Endothelial cell of umbilical vein (primary cell): ENCODE measurements at regions of chr21 and their contacts with region 1.

Region 1: DNA sequence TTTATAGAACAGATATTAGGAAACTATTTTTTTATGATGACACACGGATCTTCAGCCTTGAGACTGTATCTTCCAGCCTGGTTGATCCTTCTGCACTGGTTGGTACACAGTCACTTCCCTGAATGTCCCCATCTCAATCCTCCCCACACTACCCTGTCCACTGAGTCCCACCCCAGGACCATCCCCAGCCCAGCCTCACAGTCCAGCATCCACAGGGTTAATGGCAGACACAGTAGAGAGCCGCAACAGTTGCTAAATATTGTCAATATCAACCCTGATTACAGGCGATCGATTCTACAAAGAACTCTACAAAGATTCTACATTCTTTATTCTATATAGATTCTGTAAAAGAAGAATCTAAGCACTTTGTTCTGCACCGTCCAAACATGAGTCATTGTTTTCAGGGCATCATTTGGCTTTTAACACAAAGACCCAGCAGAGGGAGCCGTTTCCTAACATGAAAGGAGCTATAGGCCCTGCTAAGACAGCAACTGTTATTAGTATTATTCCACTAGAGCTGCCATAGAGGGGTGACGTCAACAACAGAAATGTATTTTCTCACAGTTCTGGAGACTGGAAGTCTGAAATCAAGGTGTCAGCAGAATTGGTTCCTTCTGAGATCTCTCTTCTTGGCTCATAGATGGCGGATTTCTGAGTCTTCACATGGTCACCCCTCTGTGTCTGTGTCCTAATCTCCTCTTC is 30.1 kb upstream of the IFNAR2 start:
- DNase-seq: peak; percentile 95
- H3K4me3 ChIP-seq: no peak overlapping the region
- H3K27ac ChIP-seq: no peak overlapping the region
- H3K4me1 ChIP-seq: no peaks in the 10 kb centered on the region
- H3K27me3 ChIP-seq: no peaks in the 10 kb centered on the region
- CTCF ChIP-seq: peak; percentile 66
- POLR2A ChIP-seq: no peak

Region 2: GRCh38 chr21:32712043-32712442 is 487.6 kb before region 1 on chr21:
- CTCF ChIA-PET with region 1: no interaction called
- POLR2A ChIA-PET with region 1: no interaction called
- dilution Hi-C with region 1: no loop called
- intact Hi-C with region 1: no loop called
- DNase-seq: no peak
- H3K4me3 ChIP-seq: no peak overlapping the region
- H3K27ac ChIP-seq: no peak overlapping the region
- H3K4me1 ChIP-seq: peaks cover 31% of the 10 kb centered on the region
- H3K27me3 ChIP-seq: no peaks in the 10 kb centered on the region
- CTCF ChIP-seq: no peak
- POLR2A ChIP-seq: no peak

Region 3: DNA sequence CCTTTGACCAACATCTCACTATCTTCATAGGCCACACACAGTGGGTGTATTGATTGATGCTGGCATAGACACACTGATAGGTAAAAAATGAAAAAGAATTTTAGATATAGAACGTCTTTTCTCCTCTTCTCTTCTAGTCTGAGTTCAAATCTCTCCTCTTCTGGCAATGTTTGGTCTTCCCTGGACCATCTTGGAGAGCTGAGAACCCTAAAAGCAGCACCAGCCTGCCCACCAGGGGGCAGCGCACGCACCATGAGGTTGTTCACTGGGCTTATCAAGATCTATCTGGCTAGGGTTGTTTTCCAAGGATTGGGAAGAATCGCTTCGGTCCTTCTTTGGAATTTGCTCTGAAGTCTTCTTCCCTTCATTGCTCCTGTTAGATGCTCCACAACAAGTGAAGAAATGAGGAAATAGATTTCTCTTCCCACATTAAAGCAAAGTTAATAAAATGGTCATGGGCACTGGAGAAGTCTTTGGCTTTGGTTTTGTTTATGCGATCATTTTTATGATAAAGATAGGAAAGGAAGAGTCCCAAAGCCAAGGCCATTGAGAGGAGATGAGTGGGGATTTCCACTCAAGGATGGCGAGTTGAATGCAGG is 277.9 kb before region 1 on chr21:
- CTCF ChIA-PET with region 1: interaction called, 36 read pairs
- POLR2A ChIA-PET with region 1: no interaction called
- dilution Hi-C with region 1: no loop called
- intact Hi-C with region 1: loop called (anchors 1 kb)
- DNase-seq: peak; percentile 6
- H3K4me3 ChIP-seq: no peak overlapping the region
- H3K27ac ChIP-seq: no peak overlapping the region
- H3K4me1 ChIP-seq: no peaks in the 10 kb centered on the region
- H3K27me3 ChIP-seq: peaks cover 4 to 7% of the 10 kb centered on the region in 2 experiments
- CTCF ChIP-seq: peak; percentile 61 to 65
- POLR2A ChIP-seq: no peak

Region 4: DNA sequence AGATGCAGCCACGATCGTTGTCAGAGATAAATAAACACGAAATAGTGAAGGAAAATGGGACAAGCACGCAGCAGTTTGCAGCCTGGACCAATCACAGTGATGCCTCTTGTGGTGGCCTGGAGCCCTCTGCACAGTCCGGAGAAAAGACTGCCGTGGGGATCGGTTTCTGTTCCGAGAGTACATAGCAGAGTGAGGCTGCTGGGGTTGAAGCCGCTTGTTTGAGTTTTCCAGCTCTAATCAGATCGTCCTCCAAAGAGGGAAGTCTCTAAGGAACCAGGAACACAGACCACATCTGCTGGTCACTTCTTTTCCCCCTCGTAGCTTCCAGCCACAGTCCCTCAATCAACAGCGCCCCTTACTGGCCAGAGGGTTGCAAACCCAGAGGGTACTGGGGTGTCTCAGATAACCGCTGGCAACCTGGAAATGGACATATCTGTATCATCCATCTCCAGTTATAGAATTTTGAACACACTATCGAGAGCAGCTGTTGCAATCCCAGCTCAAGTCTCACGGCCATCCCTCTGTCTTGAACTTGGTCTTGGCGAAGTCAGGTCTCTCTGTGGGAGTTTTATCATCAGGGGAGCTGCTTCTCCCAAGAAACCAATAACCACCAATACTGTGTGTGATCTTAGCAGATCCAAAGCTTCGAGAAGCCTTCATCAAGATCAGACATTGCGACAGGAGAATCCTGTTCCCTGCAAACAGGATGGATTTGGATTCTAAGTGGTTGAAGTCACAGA is 72.3 kb before region 1 on chr21:
- CTCF ChIA-PET with region 1: interaction called, 20 read pairs
- POLR2A ChIA-PET with region 1: no interaction called
- dilution Hi-C with region 1: no loop called
- intact Hi-C with region 1: loop called (anchors 2 kb)
- DNase-seq: peak; percentile 70
- H3K4me3 ChIP-seq: no peak overlapping the region
- H3K27ac ChIP-seq: no peak overlapping the region
- H3K4me1 ChIP-seq: no peaks in the 10 kb centered on the region
- H3K27me3 ChIP-seq: peaks cover 10 to 18% of the 10 kb centered on the region in 2 experiments
- CTCF ChIP-seq: peak; percentile 88
- POLR2A ChIP-seq: no peak

Region 5: GRCh38 chr21:33229784-33230544 is 30.3 kb after region 1 on chr21 and contains the start of gene IFNAR2:
- CTCF ChIA-PET with region 1: interaction called, 11 read pairs
- POLR2A ChIA-PET with region 1: no interaction called
- dilution Hi-C with region 1: no loop called
- intact Hi-C with region 1: no loop called
- DNase-seq: peak; percentile 62
- H3K4me3 ChIP-seq: peak within 1 kb of the TSS; percentile 90 to 98 (median 96)
- H3K27ac ChIP-seq: peak within 1 kb of the TSS; percentile 88
- H3K4me1 ChIP-seq: peaks cover 40% of the 10 kb centered on the region
- H3K27me3 ChIP-seq: peaks cover 6 to 10% of the 10 kb centered on the region in 2 experiments
- CTCF ChIP-seq: no peak
- POLR2A ChIP-seq: peak; percentile 15
- total RNA-seq, gene IFNAR2: 37.0 and 42.1 TPM in 2 replicates

Region 6: DNA sequence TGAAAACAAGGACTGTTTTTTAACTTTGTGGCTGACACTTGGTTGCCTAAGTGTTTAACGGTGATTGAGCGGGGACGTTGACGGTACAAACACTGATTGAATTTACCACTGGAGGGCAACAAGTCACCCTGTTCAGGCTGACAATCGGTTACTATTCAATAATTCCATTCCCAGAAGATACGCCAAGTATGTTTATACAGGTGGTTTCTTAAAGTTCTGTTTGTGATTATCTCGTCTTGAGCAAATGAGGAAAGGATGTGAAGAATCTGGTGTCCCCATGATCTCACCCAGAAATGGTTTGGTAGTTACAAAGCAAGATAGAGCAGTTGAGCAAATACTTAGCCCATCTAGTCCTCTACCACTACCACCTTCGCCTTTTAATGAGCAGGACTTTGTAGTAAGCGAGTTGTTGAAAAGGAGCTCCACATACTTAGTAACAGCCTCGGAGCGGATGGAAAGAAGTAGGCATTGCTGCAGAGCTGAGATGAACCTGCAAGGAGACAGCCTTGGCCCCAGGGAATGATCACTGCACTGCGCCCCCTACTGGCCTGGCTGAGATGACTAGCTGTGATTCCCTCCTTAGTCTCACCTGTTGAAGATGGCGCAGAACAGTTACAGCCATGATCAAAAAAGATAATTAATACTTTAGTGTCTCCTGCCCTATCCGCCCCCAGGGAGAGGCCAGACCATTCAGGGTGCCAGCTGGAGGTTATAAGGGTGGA is 161.4 kb after region 1 on chr21:
- CTCF ChIA-PET with region 1: interaction called, 74 read pairs
- POLR2A ChIA-PET with region 1: no interaction called
- dilution Hi-C with region 1: no loop called
- intact Hi-C with region 1: loop called (anchors 1 kb)
- DNase-seq: peak; percentile 77
- H3K4me3 ChIP-seq: no peak overlapping the region
- H3K27ac ChIP-seq: no peak overlapping the region
- H3K4me1 ChIP-seq: peaks cover 16% of the 10 kb centered on the region
- H3K27me3 ChIP-seq: no peaks in the 10 kb centered on the region
- CTCF ChIP-seq: peak; percentile 82 to 91
- POLR2A ChIP-seq: no peak

Region 7: DNA sequence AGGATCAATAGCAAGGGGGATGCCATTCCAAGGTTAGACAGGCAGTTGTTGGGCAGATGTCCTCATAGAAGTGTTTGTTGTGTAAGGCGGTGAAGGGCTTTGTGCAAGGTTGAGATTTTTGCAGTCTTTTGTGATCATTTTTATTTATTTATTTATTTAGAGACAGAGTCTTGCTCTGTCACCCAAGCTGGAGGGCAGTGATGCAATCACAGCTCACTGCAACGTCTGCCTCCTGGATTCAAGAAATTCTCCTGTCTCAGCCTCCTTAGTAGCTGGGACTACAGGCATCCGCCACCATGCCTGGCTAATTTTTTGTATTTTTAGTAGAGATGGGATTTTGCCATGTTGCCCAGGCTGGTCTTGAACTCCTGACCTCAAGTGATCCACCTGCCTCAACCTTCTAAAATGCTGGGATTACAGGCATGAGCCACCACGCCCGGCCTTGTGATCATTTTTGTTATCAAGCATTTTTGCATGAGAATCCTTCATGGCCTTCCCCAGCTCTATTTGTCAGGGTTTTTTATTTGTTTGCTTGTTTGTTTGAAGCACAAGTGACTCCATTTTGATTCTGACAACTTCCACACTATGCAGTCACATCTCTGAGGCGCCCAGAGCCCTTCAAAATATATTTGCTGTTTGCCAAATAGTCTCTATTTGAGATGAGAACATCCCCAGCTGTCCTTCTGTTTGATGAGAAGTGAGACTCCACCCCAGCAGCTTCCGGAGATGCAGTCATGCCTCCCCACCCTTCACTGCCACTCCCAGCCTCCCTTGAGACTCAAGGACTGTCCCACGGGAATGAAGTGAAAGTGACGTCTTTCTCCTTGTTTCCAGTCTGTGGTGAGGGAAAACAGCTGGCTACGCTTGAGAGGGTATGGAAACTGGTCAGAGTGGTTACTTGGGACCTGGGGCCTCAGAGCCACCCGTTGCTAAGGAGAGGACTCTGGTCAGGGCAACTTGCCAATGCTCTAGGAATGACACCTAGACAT is 242.1 kb after region 1 on chr21:
- CTCF ChIA-PET with region 1: interaction called, 133 read pairs
- POLR2A ChIA-PET with region 1: interaction called, 3 read pairs
- dilution Hi-C with region 1: no loop called
- intact Hi-C with region 1: loop called (anchors 1 kb)
- DNase-seq: no peak
- H3K4me3 ChIP-seq: no peak overlapping the region
- H3K27ac ChIP-seq: no peak overlapping the region
- H3K4me1 ChIP-seq: no peaks in the 10 kb centered on the region
- H3K27me3 ChIP-seq: no peaks in the 10 kb centered on the region
- CTCF ChIP-seq: no peak
- POLR2A ChIP-seq: no peak